CD8-positive, alpha-beta memory T cell (primary cell): ENCODE measurements at regions of chr6 and their contacts with region 1.

Region 1: DNA sequence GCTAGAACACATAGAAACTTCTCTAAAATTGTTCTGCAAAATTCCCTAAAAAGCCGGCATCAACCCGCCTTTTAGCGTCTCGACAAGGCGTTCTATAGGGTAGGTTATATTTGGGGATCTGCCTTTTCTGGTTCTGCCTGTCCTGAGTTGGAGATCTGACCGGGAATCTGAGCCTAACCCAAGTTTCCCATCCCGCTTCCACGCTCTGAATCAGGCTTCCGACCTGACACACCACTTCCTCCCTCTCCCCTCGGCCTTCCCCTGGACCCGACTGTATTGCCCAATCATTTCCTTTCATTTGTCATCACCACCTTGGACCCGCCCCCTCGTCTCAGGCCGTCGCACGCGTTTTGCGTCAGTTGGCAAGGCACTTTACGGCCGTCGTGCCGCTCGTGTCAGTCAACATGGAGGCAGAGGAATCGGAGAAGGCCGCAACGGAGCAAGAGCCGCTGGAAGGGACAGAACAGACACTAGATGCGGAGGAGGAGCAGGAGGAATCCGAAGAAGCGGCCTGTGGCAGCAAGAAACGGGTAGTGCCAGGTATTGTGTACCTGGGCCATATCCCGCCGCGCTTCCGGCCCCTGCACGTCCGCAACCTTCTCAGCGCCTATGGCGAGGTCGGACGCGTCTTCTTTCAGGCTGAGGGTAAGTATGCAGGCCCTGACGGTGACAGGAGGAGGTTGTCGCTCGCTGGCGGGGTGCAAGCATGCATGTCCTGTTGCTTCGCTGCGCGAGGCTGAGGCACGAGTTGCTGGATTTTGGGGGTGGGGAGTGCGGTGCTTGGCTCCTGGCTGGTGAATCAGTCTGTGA is at the start of gene ABT1:
- DNase-seq: peak; percentile 94 to 97 (median 96)
- H3K4me3 ChIP-seq: peak within 1 kb of the TSS; percentile 72
- H3K4me3 Mint-ChIP-seq: no peak within 1 kb of the TSS
- H3K27ac ChIP-seq: peak within 1 kb of the TSS; percentile 90
- H3K27ac Mint-ChIP-seq: no peak within 1 kb of the TSS
- H3K4me1 ChIP-seq: peaks cover 21% of the 10 kb centered on the region
- H3K4me1 Mint-ChIP-seq: peaks cover 8 to 13% (median 9%) of the 10 kb centered on the region in 3 donors
- H3K27me3 ChIP-seq: peaks cover 5% of the 10 kb centered on the region
- H3K27me3 Mint-ChIP-seq: peaks cover 0 to 30% of the 10 kb centered on the region in 2 donors
- total RNA-seq, gene ABT1: 34.5 to 36.1 TPM

Region 2: GRCh38 chr6:26322645-26323482 is 273.9 kb before region 1 on chr6:
- CTCF ChIA-PET with region 1: interaction called, 13 read pairs
- POLR2A ChIA-PET with region 1: interaction called, 3 read pairs
- DNase-seq: peak in 4 of 5 donors; percentile 38 to 79 (median 70)
- H3K4me3 ChIP-seq: peak overlapping the region; percentile 62
- H3K4me3 Mint-ChIP-seq: peak overlapping the region; percentile 72 to 93 (median 87)
- H3K27ac ChIP-seq: peak overlapping the region; percentile 69
- H3K27ac Mint-ChIP-seq: peak overlapping the region; percentile 80 to 94 (median 85)
- H3K4me1 ChIP-seq: no peaks in the 10 kb centered on the region
- H3K4me1 Mint-ChIP-seq: peaks cover 24 to 37% (median 28%) of the 10 kb centered on the region in 3 donors
- H3K27me3 ChIP-seq: no peaks in the 10 kb centered on the region
- H3K27me3 Mint-ChIP-seq: peaks cover 5 to 19% of the 10 kb centered on the region in 2 donors

Region 3: GRCh38 chr6:26329763-26330511 is 266.8 kb before region 1 on chr6:
- CTCF ChIA-PET with region 1: interaction called, 32 read pairs
- POLR2A ChIA-PET with region 1: interaction called, 3 read pairs
- DNase-seq: peak; percentile 23 to 65 (median 56)
- H3K4me3 ChIP-seq: no peak overlapping the region
- H3K4me3 Mint-ChIP-seq: peak overlapping the region; percentile 51 to 85 (median 82)
- H3K27ac ChIP-seq: peak overlapping the region; percentile 41
- H3K27ac Mint-ChIP-seq: peak overlapping the region in 7 of 8 donors; percentile 64 to 93 (median 81)
- H3K4me1 ChIP-seq: peaks cover 23% of the 10 kb centered on the region
- H3K4me1 Mint-ChIP-seq: peaks cover 36 to 61% (median 55%) of the 10 kb centered on the region in 3 donors
- H3K27me3 ChIP-seq: peaks cover 17% of the 10 kb centered on the region
- H3K27me3 Mint-ChIP-seq: peaks cover 34 to 38% of the 10 kb centered on the region in 2 donors

Region 4: DNA sequence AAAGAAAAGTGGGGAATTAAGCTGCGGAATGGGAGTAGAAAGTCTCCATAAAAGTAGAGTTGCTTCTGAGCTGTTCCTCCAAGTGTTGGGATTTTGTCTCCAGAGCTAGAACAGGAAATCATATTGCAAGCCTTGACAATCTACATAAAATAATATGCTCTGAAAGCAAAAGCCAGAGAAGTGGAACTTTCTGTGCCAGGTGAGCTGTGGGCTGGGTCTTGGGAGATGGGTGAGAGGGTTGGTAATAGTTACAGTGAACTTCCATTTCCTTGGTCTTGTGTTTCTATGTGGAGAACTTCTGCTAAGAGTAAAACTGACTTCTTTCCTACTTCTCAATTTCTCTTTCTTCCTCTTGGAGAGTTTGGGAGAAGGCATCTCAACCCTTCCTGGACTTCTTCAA is 64.9 kb before region 1 on chr6:
- CTCF ChIA-PET with region 1: no interaction called
- POLR2A ChIA-PET with region 1: no interaction called
- DNase-seq: no peak
- H3K4me3 ChIP-seq: no peak overlapping the region
- H3K4me3 Mint-ChIP-seq: peak overlapping the region in 4 of 7 donors; percentile 91 to 96 (median 95)
- H3K27ac ChIP-seq: no peak overlapping the region
- H3K27ac Mint-ChIP-seq: peak overlapping the region; percentile 10 to 96 (median 94)
- H3K4me1 ChIP-seq: peaks cover 29% of the 10 kb centered on the region
- H3K4me1 Mint-ChIP-seq: peaks cover 36 to 49% (median 39%) of the 10 kb centered on the region in 3 donors
- H3K27me3 ChIP-seq: no peaks in the 10 kb centered on the region
- H3K27me3 Mint-ChIP-seq: peaks cover 0 to 7% of the 10 kb centered on the region in 2 donors

Region 5: GRCh38 chr6:26553635-26554446 is 42.9 kb before region 1 on chr6:
- CTCF ChIA-PET with region 1: interaction called, 15 read pairs
- POLR2A ChIA-PET with region 1: interaction called, 3 read pairs
- DNase-seq: peak; percentile 49 to 84 (median 82)
- H3K4me3 ChIP-seq: peak overlapping the region; percentile 89
- H3K4me3 Mint-ChIP-seq: no peak overlapping the region
- H3K27ac ChIP-seq: peak overlapping the region; percentile 64
- H3K27ac Mint-ChIP-seq: no peak overlapping the region
- H3K4me1 ChIP-seq: peaks cover 11% of the 10 kb centered on the region
- H3K4me1 Mint-ChIP-seq: peaks cover 20 to 31% (median 29%) of the 10 kb centered on the region in 3 donors
- H3K27me3 ChIP-seq: no peaks in the 10 kb centered on the region
- H3K27me3 Mint-ChIP-seq: peaks cover 0 to 4% of the 10 kb centered on the region in 2 donors

Region 6: GRCh38 chr6:26568601-26569432 is 28.0 kb before region 1 on chr6:
- CTCF ChIA-PET with region 1: interaction called, 97 read pairs
- POLR2A ChIA-PET with region 1: interaction called, 4 read pairs
- DNase-seq: peak; percentile 95 to 99 (median 96)
- H3K4me3 ChIP-seq: peak overlapping the region; percentile 89
- H3K4me3 Mint-ChIP-seq: peak overlapping the region; percentile 91 to 97 (median 96)
- H3K27ac ChIP-seq: peak overlapping the region; percentile 75
- H3K27ac Mint-ChIP-seq: peak overlapping the region; percentile 89 to 99 (median 98)
- H3K4me1 ChIP-seq: peaks cover 6% of the 10 kb centered on the region
- H3K4me1 Mint-ChIP-seq: peaks cover 23 to 36% (median 29%) of the 10 kb centered on the region in 3 donors
- H3K27me3 ChIP-seq: no peaks in the 10 kb centered on the region
- H3K27me3 Mint-ChIP-seq: peaks cover 3 to 19% of the 10 kb centered on the region in 2 donors

Region 7: GRCh38 chr6:26576929-26577719 is 19.7 kb before region 1 on chr6:
- CTCF ChIA-PET with region 1: interaction called, 97 read pairs
- POLR2A ChIA-PET with region 1: interaction called, 3 read pairs
- DNase-seq: peak; percentile 32 to 68 (median 44)
- H3K4me3 ChIP-seq: peak overlapping the region; percentile 47
- H3K4me3 Mint-ChIP-seq: peak overlapping the region; percentile 81 to 93 (median 88)
- H3K27ac ChIP-seq: peak overlapping the region; percentile 47
- H3K27ac Mint-ChIP-seq: peak overlapping the region; percentile 26 to 93 (median 82)
- H3K4me1 ChIP-seq: peaks cover 12% of the 10 kb centered on the region
- H3K4me1 Mint-ChIP-seq: peaks cover 16 to 31% (median 19%) of the 10 kb centered on the region in 3 donors
- H3K27me3 ChIP-seq: no peaks in the 10 kb centered on the region
- H3K27me3 Mint-ChIP-seq: peaks cover 0 to 10% of the 10 kb centered on the region in 2 donors

Region 8: DNA sequence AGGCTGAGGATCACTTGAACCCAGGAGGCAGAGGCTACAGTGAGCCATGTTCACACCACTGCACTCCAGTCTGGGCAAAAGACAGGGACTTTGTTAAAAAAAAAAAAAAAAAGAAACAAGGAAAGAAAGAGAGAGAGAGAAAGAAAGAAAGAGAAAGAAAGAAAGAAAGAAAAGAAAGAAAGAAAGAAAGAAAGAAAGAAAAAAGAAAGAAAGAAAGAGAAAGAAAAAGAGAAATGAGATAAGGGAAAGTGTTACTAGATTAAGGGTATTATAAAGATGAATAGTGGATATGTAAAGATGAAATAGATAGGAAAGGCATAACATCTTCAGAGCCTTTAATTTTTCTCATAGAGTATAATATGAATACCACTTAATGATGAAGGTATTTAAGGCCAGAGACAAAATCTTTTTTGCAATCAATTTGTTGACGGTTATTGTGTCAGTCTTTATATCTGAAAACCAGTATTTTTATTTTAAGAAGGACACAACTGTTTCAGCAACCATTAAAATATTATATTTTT is 26.6 kb after region 1 on chr6:
- CTCF ChIA-PET with region 1: no interaction called
- POLR2A ChIA-PET with region 1: no interaction called
- DNase-seq: no peak
- H3K4me3 ChIP-seq: no peak overlapping the region
- H3K4me3 Mint-ChIP-seq: no peak overlapping the region
- H3K27ac ChIP-seq: no peak overlapping the region
- H3K27ac Mint-ChIP-seq: no peak overlapping the region
- H3K4me1 ChIP-seq: no peaks in the 10 kb centered on the region
- H3K4me1 Mint-ChIP-seq: no peaks in the 10 kb centered on the region
- H3K27me3 ChIP-seq: no peaks in the 10 kb centered on the region
- H3K27me3 Mint-ChIP-seq: peaks cover 17 to 40% of the 10 kb centered on the region in 2 donors